ENCODE measurements at regions of chr17 and their contacts with region 1.

Region 1: GRCh38 chr17:82297714-82298537 is 19.5 kb downstream of the CD7 start:
- DNase-seq: peak; percentile 80
- ATAC-seq: peak; percentile 75
- H3K4me3 ChIP-seq: peak overlapping the region; percentile 79
- H3K27ac ChIP-seq: peak overlapping the region; percentile 80
- H3K4me1 ChIP-seq: peaks cover 37% of the 10 kb centered on the region
- H3K27me3 ChIP-seq: no peaks in the 10 kb centered on the region
- CTCF ChIP-seq: 0 out of 6 replicates have a peak, but pooled peaks of 1 of the 3 experiments have one; percentile 4
- EP300 ChIP-seq: peak; percentile 91; a peak in 3 of 4 replicates
- POLR2A ChIP-seq: peak; percentile 83
- RAD21 ChIP-seq: no peak

Region 2: DNA sequence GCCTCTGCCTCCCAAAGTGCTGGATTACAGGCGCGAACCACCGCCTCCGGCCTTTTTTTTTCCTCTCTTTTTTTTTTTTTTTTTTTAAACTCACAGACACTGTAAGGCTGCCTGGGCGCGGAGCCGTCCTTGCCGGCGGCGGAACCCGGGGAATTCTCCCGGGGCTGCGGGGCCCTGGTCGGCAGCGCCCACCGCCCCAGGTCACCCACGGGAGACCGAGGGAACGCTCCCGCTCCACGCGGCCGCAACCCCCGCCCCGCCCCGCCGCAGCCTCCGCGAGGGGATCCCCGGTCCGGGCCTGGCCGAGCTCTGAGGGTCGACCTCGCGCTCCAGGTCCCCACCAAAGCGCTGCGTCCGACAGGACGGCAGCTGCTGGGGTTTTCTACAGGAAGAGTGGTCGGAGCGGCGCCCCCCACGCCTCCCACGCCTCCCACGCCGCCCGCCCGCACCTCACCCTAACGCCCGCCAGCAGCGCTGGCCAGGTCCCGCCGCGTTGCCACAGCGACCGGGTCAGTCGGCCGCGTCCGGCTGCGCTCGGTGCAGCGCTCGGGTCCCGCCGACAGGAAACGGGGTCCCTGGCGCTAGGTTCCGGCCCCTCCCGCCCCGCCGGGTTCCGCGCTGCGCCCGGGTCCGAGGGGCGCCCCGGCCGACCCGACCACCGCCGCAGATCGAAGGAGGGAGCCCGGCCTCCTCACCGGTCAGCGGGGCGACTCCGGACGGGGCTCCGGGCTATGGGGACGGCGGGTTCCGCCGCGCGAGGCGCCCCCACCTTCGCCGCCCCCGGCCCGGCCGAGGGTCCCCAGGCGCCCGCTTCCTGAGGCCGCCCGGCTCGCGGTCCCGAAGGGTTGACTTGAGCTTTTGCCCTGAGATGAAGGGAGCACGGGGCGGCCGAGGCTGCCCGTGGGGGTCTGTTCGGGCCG is 85.3 kb before region 1 on chr17 and contains the start of gene CCDC57:
- CTCF ChIA-PET with region 1: interaction called, 4 read pairs
- POLR2A ChIA-PET with region 1: interaction called, 10 read pairs
- RAD21 ChIA-PET with region 1: interaction called, 5 read pairs
- SMC1A ChIA-PET with region 1: interaction called, 4 read pairs
- in situ Hi-C with region 1: no loop called
- intact Hi-C with region 1: no loop called
- DNase-seq: no peak
- ATAC-seq: peak; percentile 77
- H3K4me3 ChIP-seq: peak within 1 kb of the TSS; percentile 76
- H3K27ac ChIP-seq: peak within 1 kb of the TSS; percentile 72
- H3K4me1 ChIP-seq: peaks cover 29% of the 10 kb centered on the region
- H3K27me3 ChIP-seq: no peaks in the 10 kb centered on the region
- CTCF ChIP-seq: no peak
- EP300 ChIP-seq: no peak
- POLR2A ChIP-seq: peak; percentile 68
- RAD21 ChIP-seq: no peak
- polyA plus RNA-seq, gene CCDC57: 5.4 to 18.0 TPM

Region 3: DNA sequence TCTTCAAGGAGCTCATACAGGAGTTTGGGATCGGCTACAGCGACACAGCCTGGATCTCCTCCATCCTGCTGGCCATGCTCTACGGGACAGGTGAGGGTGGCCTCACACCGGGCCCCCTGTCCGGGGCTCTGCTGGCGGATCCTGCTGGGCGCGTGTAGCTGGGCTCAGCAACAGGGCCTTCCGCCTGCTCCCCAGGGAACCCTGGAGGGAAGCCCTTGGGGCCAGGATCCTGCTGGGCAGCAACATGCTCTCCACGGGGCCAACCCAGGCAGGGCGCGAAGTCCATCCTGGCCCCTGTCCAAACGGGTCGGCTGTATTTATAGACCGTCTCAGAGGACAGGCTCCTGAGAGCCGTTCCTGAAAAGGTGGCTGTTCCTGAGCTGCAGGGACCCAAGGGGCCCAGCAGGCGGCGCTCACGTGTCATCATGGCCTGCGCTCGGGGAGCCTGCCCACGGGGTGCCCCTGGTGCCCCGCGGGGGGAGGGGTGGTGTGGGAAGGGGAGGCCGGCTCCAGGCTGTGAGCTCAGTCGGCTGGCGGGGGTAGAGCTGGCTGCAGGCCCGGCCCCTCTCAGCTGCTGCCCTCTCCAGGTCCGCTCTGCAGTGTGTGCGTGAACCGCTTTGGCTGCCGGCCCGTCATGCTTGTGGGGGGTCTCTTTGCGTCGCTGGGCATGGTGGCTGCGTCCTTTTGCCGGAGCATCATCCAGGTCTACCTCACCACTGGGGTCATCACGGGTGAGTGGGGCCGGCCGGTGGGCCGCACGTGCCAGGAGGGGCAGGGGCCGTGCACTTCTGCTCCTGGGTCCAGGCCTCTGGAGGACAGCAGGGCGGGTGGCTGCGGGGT is 61.6 kb before region 1 on chr17:
- CTCF ChIA-PET with region 1: interaction called, 19 read pairs
- POLR2A ChIA-PET with region 1: interaction called, 17 read pairs
- RAD21 ChIA-PET with region 1: interaction called, 18 read pairs
- SMC1A ChIA-PET with region 1: interaction called, 12 read pairs
- in situ Hi-C with region 1: no loop called
- intact Hi-C with region 1: no loop called
- DNase-seq: no peak
- ATAC-seq: peak; percentile 41
- H3K4me3 ChIP-seq: no peak overlapping the region
- H3K27ac ChIP-seq: no peak overlapping the region
- H3K4me1 ChIP-seq: peaks cover 64% of the 10 kb centered on the region
- H3K27me3 ChIP-seq: no peaks in the 10 kb centered on the region
- CTCF ChIP-seq: peak; percentile 74 to 91 (median 78)
- EP300 ChIP-seq: no peak
- POLR2A ChIP-seq: no peak
- RAD21 ChIP-seq: peak; percentile 71

Region 4: DNA sequence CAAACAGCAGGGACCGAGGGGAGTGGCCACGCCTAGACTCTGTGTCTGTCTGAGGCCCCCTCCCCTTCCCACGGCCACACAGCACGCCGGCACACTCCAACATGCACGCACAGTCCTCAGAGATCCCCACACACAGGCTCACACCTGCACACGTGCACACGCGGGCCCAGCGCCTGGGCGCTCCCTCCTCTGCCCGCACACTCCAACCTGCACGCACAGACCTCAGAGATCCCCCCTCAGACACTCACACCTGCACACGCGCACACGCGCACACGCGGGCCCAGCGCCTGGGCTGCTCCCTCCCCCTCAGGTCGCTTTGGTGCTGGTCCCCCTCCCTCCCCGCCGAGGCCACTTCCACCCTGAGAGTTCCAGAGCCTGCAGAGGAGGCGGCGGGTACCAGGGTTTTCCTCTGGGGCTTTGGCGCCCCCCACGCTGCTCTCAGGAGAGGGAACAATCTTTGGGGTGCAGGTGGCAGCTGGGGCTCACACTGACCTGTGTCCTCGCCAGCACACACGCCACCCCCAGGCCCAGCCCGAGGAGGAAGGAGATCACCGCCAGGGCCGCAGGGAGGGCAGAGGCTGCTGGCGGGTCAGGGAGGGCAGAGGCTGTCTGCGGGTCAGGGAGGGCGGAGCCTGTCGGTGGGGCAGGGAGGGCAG is 17.9 kb after region 1 on chr17:
- CTCF ChIA-PET with region 1: interaction called, 94 read pairs
- POLR2A ChIA-PET with region 1: interaction called, 32 read pairs
- RAD21 ChIA-PET with region 1: interaction called, 77 read pairs
- SMC1A ChIA-PET with region 1: interaction called, 42 read pairs
- in situ Hi-C with region 1: no loop called
- intact Hi-C with region 1: loop called (anchors 1 kb)
- DNase-seq: no peak
- ATAC-seq: peak; percentile 56
- H3K4me3 ChIP-seq: no peak overlapping the region
- H3K27ac ChIP-seq: no peak overlapping the region
- H3K4me1 ChIP-seq: no peaks in the 10 kb centered on the region
- H3K27me3 ChIP-seq: peaks cover 0 to 2% of the 10 kb centered on the region in 2 experiments; a peak in 2 of 4 replicates
- CTCF ChIP-seq: no peak
- EP300 ChIP-seq: no peak
- POLR2A ChIP-seq: no peak
- RAD21 ChIP-seq: no peak

Region 5: DNA sequence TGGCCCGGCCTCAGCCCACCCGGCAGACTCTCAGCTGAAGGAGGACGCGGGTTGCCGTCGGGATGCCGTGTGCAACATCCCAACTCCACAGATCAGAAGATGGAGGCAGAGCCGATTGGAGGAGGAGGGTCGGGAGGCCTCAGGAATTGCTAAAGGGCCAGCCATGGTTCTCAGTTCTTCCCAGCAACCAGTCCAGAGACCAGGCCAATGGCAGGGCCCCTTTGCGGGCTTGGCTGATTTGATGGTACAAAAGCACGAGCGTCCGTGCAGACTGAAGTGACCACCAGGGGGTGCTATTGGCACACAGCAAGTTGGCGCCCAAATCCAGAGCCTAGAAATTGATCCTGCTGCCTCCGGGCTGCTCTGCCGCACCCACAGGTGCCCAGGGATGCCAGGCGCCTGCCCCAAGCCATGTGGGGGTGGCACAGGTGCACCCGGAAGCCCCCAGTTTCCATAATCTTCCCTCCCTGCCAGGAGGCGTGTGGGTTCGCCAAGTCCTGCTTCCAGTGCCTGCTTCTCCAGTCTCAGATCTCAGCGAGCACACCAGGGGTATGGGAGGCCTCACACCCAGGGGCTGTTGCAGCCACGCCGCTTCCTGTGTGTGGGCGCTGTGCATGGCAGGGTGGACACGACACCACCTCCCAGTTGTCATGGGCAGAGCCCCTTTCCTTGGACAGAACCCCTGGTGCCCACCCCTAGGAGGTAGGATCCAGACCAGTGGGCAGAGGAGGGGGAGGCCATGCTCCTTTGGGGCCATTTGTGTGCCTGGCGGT is 54.0 kb after region 1 on chr17:
- CTCF ChIA-PET with region 1: interaction called, 35 read pairs
- POLR2A ChIA-PET with region 1: interaction called, 5 read pairs
- RAD21 ChIA-PET with region 1: interaction called, 14 read pairs
- SMC1A ChIA-PET with region 1: interaction called, 14 read pairs
- in situ Hi-C with region 1: no loop called
- intact Hi-C with region 1: no loop called
- DNase-seq: no peak
- ATAC-seq: peak; percentile 93
- H3K4me3 ChIP-seq: no peak overlapping the region
- H3K27ac ChIP-seq: no peak overlapping the region
- H3K4me1 ChIP-seq: peaks cover 15% of the 10 kb centered on the region
- H3K27me3 ChIP-seq: no peaks in the 10 kb centered on the region
- CTCF ChIP-seq: peak; percentile 92 to 93 (median 92)
- EP300 ChIP-seq: no peak
- POLR2A ChIP-seq: no peak
- RAD21 ChIP-seq: peak; percentile 86

Measured in GM12878 (cell line).